ENCODE measurements at regions of chr15 and their contacts with region 1.

Region 1: DNA sequence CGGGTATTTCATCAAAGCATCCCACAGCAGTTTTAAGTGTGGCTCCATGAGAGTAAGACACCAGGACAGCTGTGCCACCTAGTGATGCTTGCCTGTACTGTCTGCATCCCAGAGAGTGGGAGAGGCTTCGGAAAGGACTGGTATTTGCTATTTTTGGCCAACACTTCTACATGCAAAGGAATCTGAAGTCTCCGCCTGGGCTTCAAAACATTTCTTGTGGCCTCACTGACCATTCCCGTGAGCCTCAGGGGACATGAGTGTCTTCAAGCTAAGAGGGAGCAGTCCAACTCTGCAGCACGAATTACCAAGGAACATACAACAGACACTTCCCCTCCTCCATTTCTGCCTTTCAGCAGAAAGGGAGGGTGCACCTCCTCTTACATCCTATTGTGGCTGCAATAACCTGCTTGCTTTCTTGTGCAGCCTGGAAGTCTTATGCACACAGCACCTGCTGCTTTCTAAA is 177.5 kb downstream of the RORA start:
- DNase-seq: peak; percentile 14 to 49
- ATAC-seq: peak; percentile 85 to 95 (median 90)
- H3K4me3 ChIP-seq: no peak overlapping the region
- H3K27ac ChIP-seq: no peak overlapping the region
- H3K4me1 ChIP-seq: peaks cover 0 to 15% (median 10%) of the 10 kb centered on the region in 9 donors
- H3K27me3 ChIP-seq: no peaks in the 10 kb centered on the region
- CTCF ChIP-seq: peak; percentile 43 to 78 (median 65)

Region 2: GRCh38 chr15:60507596-60508424 is 543.8 kb before region 1 on chr15:
- intact Hi-C with region 1: loop called in 1 of 10 experiments (anchors 10 kb)
- DNase-seq: peak in 1 of 2 donors; percentile 50
- ATAC-seq: peak in 7 of 8 donors; percentile 55 to 83 (median 72)
- H3K4me3 ChIP-seq: no peak overlapping the region
- H3K27ac ChIP-seq: peak overlapping the region in 2 of 10 donors; percentile 12 to 28
- H3K4me1 ChIP-seq: peaks cover 10 to 46% (median 25%) of the 10 kb centered on the region in 9 donors
- H3K27me3 ChIP-seq: no peaks in the 10 kb centered on the region
- CTCF ChIP-seq: peak; percentile 85 to 97 (median 90)

Region 3: GRCh38 chr15:60568301-60568742 is 483.3 kb before region 1 on chr15:
- intact Hi-C with region 1: no loop called
- DNase-seq: no peak
- ATAC-seq: no peak
- H3K4me3 ChIP-seq: no peak overlapping the region
- H3K27ac ChIP-seq: peak overlapping the region in 1 of 10 donors; percentile 41
- H3K4me1 ChIP-seq: peaks cover 0 to 32% (median 0%) of the 10 kb centered on the region in 9 donors
- H3K27me3 ChIP-seq: no peaks in the 10 kb centered on the region
- CTCF ChIP-seq: no peak

Region 4: GRCh38 chr15:60585743-60586708 is 465.6 kb before region 1 on chr15:
- intact Hi-C with region 1: loop called in 9 of 10 experiments (anchors 1 to 10 kb)
- DNase-seq: peak in 1 of 2 donors; percentile 71
- ATAC-seq: peak; percentile 61 to 87 (median 76)
- H3K4me3 ChIP-seq: no peak overlapping the region
- H3K27ac ChIP-seq: peak overlapping the region in 2 of 10 donors; percentile 28 to 52
- H3K4me1 ChIP-seq: peaks cover 2 to 72% (median 38%) of the 10 kb centered on the region in 9 donors
- H3K27me3 ChIP-seq: peaks cover 0 to 28% (median 0%) of the 10 kb centered on the region in 7 donors
- CTCF ChIP-seq: peak; percentile 74 to 97 (median 91)

Region 5: GRCh38 chr15:61175024-61175423 is 123.4 kb after region 1 on chr15:
- intact Hi-C with region 1: no loop called
- DNase-seq: no peak
- ATAC-seq: no peak
- H3K4me3 ChIP-seq: no peak overlapping the region
- H3K27ac ChIP-seq: no peak overlapping the region
- H3K4me1 ChIP-seq: peaks cover 0 to 11% (median 9%) of the 10 kb centered on the region in 9 donors
- H3K27me3 ChIP-seq: no peaks in the 10 kb centered on the region
- CTCF ChIP-seq: no peak